ENCODE measurements at regions of chr5 and their contacts with region 1.

Region 1: DNA sequence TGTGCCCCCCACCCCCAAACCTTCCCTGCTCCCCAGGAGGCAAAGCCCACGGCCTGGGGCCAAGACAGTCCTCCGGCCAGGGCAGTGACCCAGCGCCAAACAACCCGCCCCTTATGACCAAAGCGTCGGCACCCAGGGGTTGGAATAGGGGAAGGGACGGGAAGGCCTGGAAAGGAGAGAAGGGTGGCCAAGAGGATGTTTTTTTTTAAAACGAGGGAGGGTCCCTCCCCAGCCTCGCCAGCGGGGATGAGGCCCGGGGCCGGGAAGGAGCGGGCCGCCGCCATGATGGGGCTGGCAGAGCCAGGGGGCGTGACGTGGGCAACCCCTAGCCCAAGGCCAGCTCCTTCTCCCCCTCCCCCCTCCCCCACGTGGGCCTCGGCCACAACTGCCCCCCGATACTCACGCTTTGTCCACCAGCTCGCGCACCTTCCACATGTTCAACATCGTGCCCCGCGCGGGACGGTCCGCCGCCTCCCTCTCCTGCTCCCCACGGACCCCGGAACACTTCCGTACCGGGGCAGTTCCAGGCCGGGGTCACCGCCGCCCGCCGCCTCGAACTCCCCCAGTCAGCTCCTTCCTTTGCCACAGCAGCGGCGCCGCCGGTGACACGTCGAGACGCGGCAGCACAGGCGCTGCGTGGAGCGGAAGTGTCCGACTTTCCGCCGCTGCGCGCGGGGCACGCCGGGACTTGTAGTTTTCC is at the start of gene CLINT1:
- DNase-seq: peak; percentile 78 to 86 (median 84)
- ATAC-seq: peak; percentile 96
- H3K4me3 ChIP-seq: peak within 1 kb of the TSS; percentile 96
- H3K4me3 Mint-ChIP-seq: peak within 1 kb of the TSS; percentile 88 to 99 (median 96)
- H3K27ac ChIP-seq: peak within 1 kb of the TSS; percentile 85
- H3K27ac Mint-ChIP-seq: peak within 1 kb of the TSS; percentile 94 to 99 (median 96)
- H3K4me1 ChIP-seq: peaks cover 7 to 13% of the 10 kb centered on the region in 2 donors
- H3K4me1 Mint-ChIP-seq: peaks cover 51 to 83% (median 78%) of the 10 kb centered on the region in 7 donors
- H3K27me3 ChIP-seq: no peaks in the 10 kb centered on the region
- H3K27me3 Mint-ChIP-seq: no peaks in the 10 kb centered on the region
- total RNA-seq, gene CLINT1: 58.8 to 94.2 (median 74.0) TPM

Region 2: DNA sequence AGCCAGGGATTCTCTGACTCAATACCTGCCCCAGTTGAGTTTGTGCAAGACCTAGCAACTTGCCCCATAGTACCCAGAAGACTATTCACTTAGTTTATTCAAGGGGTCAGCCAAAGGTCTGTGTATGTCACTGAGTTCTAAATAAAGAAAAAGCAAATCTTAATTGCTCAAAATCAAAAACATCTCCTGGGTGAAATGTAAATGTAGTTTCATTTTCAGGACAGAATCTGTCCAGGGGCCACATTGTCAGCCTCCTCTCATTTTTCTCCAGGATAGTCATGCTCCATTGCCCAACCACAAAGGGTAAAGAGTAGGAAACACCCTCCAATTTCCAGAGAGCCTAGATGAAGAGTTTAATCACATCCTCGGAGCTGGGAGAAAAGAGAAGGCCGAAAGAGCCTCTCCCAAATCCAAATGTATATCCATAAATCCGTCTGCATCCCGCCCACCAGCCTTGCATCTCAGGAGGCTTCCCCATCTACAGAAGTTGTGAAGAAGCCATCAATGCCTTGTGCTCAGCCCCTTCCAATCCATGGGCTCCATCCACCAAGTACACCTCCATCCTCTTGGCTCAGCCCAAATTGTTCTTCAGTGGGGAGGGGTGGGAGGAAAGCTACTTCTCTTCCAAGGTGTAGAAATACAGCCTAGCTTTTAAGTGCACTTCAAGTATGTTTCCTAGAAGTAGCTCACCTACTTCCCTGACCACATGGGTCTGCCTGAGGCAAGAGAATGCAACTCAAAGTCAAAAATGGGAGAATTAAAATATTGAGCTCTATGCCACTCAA is 310.0 kb before region 1 on chr5:
- CTCF ChIA-PET with region 1: no interaction called
- POLR2A ChIA-PET with region 1: no interaction called
- intact Hi-C with region 1: loop called in 1 of 2 experiments (anchors 1 kb)
- DNase-seq: no peak
- ATAC-seq: peak; percentile 23
- H3K4me3 ChIP-seq: no peak overlapping the region
- H3K4me3 Mint-ChIP-seq: peak overlapping the region in 1 of 10 donors; percentile 81
- H3K27ac ChIP-seq: no peak overlapping the region
- H3K27ac Mint-ChIP-seq: peak overlapping the region in 1 of 9 donors; percentile 99
- H3K4me1 ChIP-seq: peaks cover 0 to 34% of the 10 kb centered on the region in 2 donors
- H3K4me1 Mint-ChIP-seq: peaks cover 0 to 89% (median 15%) of the 10 kb centered on the region in 7 donors
- H3K27me3 ChIP-seq: no peaks in the 10 kb centered on the region
- H3K27me3 Mint-ChIP-seq: no peaks in the 10 kb centered on the region

Region 3: DNA sequence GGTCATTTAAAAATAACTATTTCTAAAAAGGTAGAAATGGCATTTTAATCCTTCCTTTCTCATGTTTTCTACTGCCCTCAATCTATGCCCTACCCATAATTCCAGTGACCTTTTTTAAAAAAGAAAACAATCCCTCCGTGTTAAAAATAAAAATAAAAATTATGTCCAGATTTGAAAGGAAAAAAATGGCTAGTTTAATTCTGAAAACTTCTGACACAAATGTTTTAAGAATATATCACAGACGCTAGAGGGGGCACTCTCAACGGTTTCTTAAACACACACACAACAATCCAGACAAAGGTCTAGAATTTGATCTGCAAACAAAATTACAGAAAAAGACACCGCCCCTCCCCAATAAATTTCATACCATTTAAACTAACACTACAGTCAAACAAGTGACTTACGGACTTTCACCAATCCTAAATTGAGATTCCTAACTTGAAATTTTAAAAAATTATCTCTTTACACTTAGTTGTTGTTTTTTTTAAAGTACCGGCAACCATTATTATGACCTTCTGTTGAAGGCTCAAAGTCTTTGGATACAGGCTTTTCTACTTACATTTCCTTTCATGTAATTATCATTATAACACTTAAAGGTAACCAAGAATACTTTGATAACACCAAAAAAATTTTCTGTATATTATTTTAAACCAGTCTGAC is 38.0 kb before region 1 on chr5:
- CTCF ChIA-PET with region 1: interaction called, 5 read pairs
- POLR2A ChIA-PET with region 1: no interaction called
- intact Hi-C with region 1: loop called (anchors 2 to 5 kb)
- DNase-seq: peak in 7 of 9 donors; percentile 5 to 45 (median 32)
- ATAC-seq: peak; percentile 55
- H3K4me3 ChIP-seq: no peak overlapping the region
- H3K4me3 Mint-ChIP-seq: no peak overlapping the region
- H3K27ac ChIP-seq: no peak overlapping the region
- H3K27ac Mint-ChIP-seq: peak overlapping the region in 6 of 9 donors; percentile 0 to 84 (median 40)
- H3K4me1 ChIP-seq: peaks cover 0 to 8% of the 10 kb centered on the region in 2 donors
- H3K4me1 Mint-ChIP-seq: peaks cover 15 to 52% (median 41%) of the 10 kb centered on the region in 7 donors
- H3K27me3 ChIP-seq: no peaks in the 10 kb centered on the region
- H3K27me3 Mint-ChIP-seq: no peaks in the 10 kb centered on the region

Region 4: GRCh38 chr5:157890836-157891597 is 32.3 kb after region 1 on chr5:
- CTCF ChIA-PET with region 1: no interaction called
- POLR2A ChIA-PET with region 1: no interaction called
- intact Hi-C with region 1: loop called in 1 of 2 experiments (anchors 5 kb)
- DNase-seq: peak in 5 of 9 donors; percentile 4 to 23 (median 19)
- ATAC-seq: peak; percentile 65
- H3K4me3 ChIP-seq: no peak overlapping the region
- H3K4me3 Mint-ChIP-seq: peak overlapping the region in 5 of 10 donors; percentile 12 to 40 (median 39)
- H3K27ac ChIP-seq: no peak overlapping the region
- H3K27ac Mint-ChIP-seq: peak overlapping the region in 8 of 9 donors; percentile 31 to 81 (median 76)
- H3K4me1 ChIP-seq: no peaks in the 10 kb centered on the region
- H3K4me1 Mint-ChIP-seq: peaks cover 0 to 23% (median 17%) of the 10 kb centered on the region in 7 donors
- H3K27me3 ChIP-seq: no peaks in the 10 kb centered on the region
- H3K27me3 Mint-ChIP-seq: no peaks in the 10 kb centered on the region

Region 5: GRCh38 chr5:157994906-157995519 is 136.3 kb after region 1 on chr5:
- CTCF ChIA-PET with region 1: no interaction called
- POLR2A ChIA-PET with region 1: no interaction called
- intact Hi-C with region 1: loop called in 1 of 2 experiments (anchors 2 kb)
- DNase-seq: peak; percentile 5 to 52 (median 31)
- ATAC-seq: peak; percentile 84
- H3K4me3 ChIP-seq: no peak overlapping the region
- H3K4me3 Mint-ChIP-seq: peak overlapping the region in 9 of 10 donors; percentile 29 to 77 (median 61)
- H3K27ac ChIP-seq: no peak overlapping the region
- H3K27ac Mint-ChIP-seq: no peak overlapping the region
- H3K4me1 ChIP-seq: peaks cover 14 to 16% of the 10 kb centered on the region in 2 donors
- H3K4me1 Mint-ChIP-seq: peaks cover 8 to 20% (median 12%) of the 10 kb centered on the region in 7 donors
- H3K27me3 ChIP-seq: peaks cover 0 to 3% of the 10 kb centered on the region in 2 donors
- H3K27me3 Mint-ChIP-seq: peaks cover 13 to 56% (median 20%) of the 10 kb centered on the region in 5 donors

Region 6: GRCh38 chr5:159412284-159413046 is 1553.8 kb after region 1 on chr5:
- CTCF ChIA-PET with region 1: no interaction called
- POLR2A ChIA-PET with region 1: no interaction called
- intact Hi-C with region 1: loop called in 1 of 2 experiments (anchors 5 kb)
- DNase-seq: peak; percentile 9 to 88 (median 80)
- ATAC-seq: peak; percentile 94
- H3K4me3 ChIP-seq: no peak overlapping the region
- H3K4me3 Mint-ChIP-seq: peak overlapping the region; percentile 26 to 80 (median 73)
- H3K27ac ChIP-seq: peak overlapping the region; percentile 22
- H3K27ac Mint-ChIP-seq: peak overlapping the region; percentile 80 to 97 (median 92)
- H3K4me1 ChIP-seq: peaks cover 30 to 42% of the 10 kb centered on the region in 2 donors
- H3K4me1 Mint-ChIP-seq: peaks cover 28 to 62% (median 42%) of the 10 kb centered on the region in 7 donors
- H3K27me3 ChIP-seq: no peaks in the 10 kb centered on the region
- H3K27me3 Mint-ChIP-seq: peaks cover 0 to 19% (median 0%) of the 10 kb centered on the region in 5 donors

Measured in naive thymus-derived CD4-positive, alpha-beta T cell (primary cell).